ENCODE measurements at regions of chr4 and their contacts with region 1.

Region 1: GRCh38 chr4:54322818-54323417 is 93.8 kb downstream of the PDGFRA start:
- DNase-seq: peak; percentile 3
- H3K4me3 ChIP-seq: no peak overlapping the region
- CTCF ChIP-seq: peak; percentile 72

Region 2: GRCh38 chr4:54017308-54017707 is 305.6 kb before region 1 on chr4:
- CTCF ChIA-PET with region 1: no interaction called
- POLR2A ChIA-PET with region 1: no interaction called
- DNase-seq: no peak
- H3K4me3 ChIP-seq: no peak overlapping the region
- CTCF ChIP-seq: no peak

Region 3: GRCh38 chr4:54333657-54334056 is 10.7 kb after region 1 on chr4:
- CTCF ChIA-PET with region 1: interaction called, 19 read pairs
- POLR2A ChIA-PET with region 1: no interaction called
- DNase-seq: no peak
- H3K4me3 ChIP-seq: no peak overlapping the region
- CTCF ChIP-seq: no peak

Region 4: DNA sequence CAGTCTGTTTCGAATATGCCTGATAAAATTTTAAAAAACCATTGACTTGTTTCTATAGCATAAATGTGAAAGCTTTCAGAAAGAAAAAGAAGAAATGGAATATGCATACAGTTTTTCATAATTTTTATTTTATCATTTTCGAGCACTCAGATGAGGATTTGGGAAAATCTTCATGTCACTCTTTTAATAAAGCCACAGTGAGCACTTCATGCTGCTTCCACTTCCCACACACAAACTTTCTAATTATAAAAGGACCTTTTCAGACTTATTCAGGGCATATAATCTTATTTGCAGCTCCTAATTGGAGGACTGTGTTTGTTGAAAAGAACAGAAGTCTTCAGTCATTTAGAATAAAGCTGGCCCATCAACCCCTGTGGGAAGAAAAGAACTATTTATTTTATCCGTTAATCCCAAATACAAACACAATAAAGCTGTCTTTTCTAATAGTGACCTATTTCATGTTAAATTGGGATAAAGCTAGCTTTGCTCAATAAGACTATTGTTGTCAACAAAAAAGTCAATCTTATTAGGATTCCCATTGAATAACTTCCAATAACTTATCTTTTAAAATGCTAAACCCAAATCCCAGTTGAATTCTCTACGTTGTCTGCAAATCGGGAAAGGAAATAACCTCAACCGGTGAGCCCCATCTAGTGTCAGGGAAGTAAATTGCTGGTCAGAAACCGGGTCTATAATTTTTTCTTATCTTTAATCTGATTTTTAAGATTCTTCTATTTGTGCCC is 117.6 kb after region 1 on chr4:
- CTCF ChIA-PET with region 1: interaction called, 77 read pairs
- POLR2A ChIA-PET with region 1: no interaction called
- DNase-seq: no peak
- H3K4me3 ChIP-seq: no peak overlapping the region
- CTCF ChIP-seq: peak; percentile 47

Region 5: DNA sequence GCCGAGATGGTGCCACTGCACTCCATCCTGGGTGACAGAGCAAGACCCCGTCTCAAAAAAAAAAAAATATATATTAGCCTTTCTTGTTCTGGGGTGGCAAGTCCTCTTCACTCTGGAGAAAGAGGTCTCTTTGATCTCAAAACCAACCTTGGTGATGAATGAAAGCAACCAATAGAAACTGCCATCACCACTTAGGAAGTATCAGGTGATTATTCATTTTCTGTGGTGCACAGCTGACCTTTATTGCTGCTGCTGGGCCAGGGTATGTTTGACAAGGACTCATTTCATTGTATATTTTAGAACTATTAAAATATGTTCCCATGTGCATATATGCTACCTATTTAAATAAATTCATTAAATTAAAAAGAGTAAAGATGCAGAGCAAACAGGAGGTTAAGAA is 258.9 kb after region 1 on chr4:
- CTCF ChIA-PET with region 1: no interaction called
- POLR2A ChIA-PET with region 1: no interaction called
- DNase-seq: no peak
- H3K4me3 ChIP-seq: no peak overlapping the region
- CTCF ChIP-seq: no peak

Region 6: DNA sequence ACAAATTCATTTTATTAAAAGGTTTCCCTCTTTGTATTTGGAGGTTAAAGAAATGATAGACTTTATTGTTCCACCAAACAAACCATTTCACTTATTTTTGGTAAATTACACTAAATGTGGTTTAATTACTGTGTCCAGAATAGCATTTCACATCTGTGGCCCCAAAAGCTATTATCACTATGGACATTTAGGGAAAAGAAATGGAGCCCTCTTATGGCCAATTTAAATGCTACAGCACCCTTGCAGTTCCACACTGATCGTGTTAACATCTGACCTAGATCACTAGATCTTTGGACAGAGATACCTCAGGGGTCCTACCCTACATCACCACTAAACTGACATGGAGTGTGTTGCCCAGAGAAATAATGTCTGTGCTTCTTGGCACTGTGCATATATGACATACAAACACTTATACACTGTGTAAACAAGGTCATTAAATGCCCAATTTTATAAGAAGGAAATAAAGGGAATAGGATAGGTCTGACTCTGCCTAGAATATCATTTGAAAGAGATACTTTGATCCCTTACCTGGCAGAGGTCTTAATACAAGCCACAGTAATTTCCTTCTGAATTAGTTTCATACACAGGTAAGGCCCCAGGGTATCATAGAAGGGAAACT is 638.5 kb after region 1 on chr4:
- CTCF ChIA-PET with region 1: interaction called, 197 read pairs
- POLR2A ChIA-PET with region 1: no interaction called
- DNase-seq: no peak
- H3K4me3 ChIP-seq: no peak overlapping the region
- CTCF ChIP-seq: peak; percentile 52